ENCODE measurements at regions of chr2 and their contacts with region 1.

Region 1: DNA sequence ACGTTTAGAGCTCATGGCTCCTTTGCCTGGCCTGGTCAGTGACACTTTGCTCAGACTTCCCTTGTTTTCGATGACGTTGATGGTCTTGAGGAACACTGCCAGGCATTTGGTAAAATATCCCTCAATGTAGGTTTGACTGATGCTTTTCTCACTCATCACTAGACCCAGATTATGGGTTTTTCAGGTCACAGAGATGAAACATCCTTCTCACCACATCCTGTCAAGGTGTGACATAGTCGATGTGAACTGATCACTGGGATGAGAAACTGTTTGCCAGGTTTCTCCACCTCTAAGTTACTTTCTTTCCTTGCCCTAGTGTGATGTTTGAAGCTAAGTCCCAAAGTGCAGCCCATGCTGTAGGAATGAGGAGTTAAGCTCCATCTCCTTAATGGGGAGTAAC is 81.5 kb downstream of the AFF3 start:
- DNase-seq: no peak
- ATAC-seq: no peak
- H3K4me3 ChIP-seq: no peak overlapping the region
- H3K27ac ChIP-seq: no peak overlapping the region
- H3K4me1 ChIP-seq: no peaks in the 10 kb centered on the region
- H3K27me3 ChIP-seq: no peaks in the 10 kb centered on the region
- CTCF ChIP-seq: no peak

Region 2: DNA sequence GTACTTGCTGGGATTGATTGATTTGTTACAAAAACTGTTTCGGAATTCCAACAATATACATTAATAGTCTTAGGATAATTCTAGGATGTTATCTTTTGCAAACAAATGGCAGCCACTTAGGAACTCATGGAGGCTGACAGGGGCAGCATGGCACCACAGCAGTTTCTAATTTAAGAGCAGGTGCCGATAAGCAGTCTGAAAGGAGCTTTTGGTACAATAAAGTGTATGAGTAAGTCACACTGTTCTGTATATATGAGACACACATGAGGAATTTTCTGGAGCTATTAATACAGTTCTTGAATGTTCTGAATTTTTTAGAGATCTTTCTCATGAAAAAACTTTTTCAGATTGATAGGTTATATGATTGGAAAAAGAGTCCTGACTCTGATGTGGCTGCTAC is 671.5 kb before region 1 on chr2:
- CTCF ChIA-PET with region 1: no interaction called
- POLR2A ChIA-PET with region 1: no interaction called
- intact Hi-C with region 1: no loop called
- DNase-seq: no peak
- ATAC-seq: no peak
- H3K4me3 ChIP-seq: no peak overlapping the region
- H3K27ac ChIP-seq: no peak overlapping the region
- H3K4me1 ChIP-seq: peaks cover 9% of the 10 kb centered on the region; the same call in 1 of the 2 replicates
- H3K27me3 ChIP-seq: no peaks in the 10 kb centered on the region
- CTCF ChIP-seq: no peak

Region 3: DNA sequence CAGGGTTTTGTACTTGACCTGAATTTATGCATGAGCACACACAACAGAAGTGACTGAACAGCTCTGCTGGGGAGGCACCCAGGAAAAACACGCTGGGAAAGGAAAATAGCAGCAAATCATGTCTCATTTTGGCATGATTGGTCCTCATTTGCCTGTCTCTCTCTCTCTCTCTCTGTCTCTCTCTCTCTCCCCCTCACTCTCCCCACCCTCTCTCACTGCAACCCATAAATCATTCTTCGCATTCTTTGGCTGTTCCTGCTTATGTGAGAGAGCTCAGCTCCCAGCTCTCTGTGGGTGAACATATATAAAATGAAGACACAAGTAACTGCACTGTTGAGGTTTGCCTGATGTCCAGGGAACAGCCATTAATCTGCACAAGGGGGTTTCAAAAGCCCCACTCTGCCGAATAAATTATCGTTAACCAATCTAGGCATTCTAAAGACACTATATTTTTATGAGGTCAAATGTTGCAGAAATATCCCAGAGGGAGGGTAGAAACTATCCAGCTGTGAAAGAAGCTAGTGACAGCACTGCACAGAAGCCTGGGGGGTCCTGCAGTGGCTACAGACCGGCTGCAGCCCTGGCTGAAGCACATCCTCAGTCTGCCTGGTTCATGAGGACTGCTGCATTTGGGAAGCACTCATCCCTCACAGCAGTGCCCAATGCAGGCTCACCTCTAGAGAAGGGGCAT is 178.8 kb before region 1 on chr2:
- CTCF ChIA-PET with region 1: no interaction called
- POLR2A ChIA-PET with region 1: no interaction called
- intact Hi-C with region 1: loop called (anchors 10 kb)
- DNase-seq: peak; percentile 60
- ATAC-seq: no peak
- H3K4me3 ChIP-seq: no peak overlapping the region
- H3K27ac ChIP-seq: no peak overlapping the region
- H3K4me1 ChIP-seq: peaks cover 40% of the 10 kb centered on the region
- H3K27me3 ChIP-seq: no peaks in the 10 kb centered on the region
- CTCF ChIP-seq: no peak

Region 4: DNA sequence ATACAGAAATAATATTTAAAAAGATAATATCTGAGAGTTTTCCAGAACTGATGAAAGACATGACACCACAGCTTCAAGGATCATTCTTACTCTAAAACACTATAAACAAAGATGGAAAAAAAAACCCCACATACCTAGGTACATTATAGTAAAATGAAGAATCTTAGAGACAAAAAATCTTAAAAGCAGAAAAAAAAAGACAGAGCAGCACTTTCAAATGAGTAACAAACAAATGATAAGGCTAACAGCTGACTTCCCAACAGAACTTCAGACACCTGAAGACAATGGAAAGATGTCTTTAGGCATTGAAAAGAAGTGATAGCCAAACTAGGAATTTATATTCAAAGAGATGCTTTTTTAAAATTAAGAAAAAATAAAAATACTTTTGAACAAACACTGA is 102.7 kb after region 1 on chr2:
- CTCF ChIA-PET with region 1: no interaction called
- POLR2A ChIA-PET with region 1: no interaction called
- intact Hi-C with region 1: no loop called
- DNase-seq: no peak
- ATAC-seq: no peak
- H3K4me3 ChIP-seq: no peak overlapping the region
- H3K27ac ChIP-seq: no peak overlapping the region
- H3K4me1 ChIP-seq: no peaks in the 10 kb centered on the region
- H3K27me3 ChIP-seq: no peaks in the 10 kb centered on the region
- CTCF ChIP-seq: no peak

Region 5: GRCh38 chr2:101400048-101400447 is 1339.2 kb after region 1 on chr2:
- CTCF ChIA-PET with region 1: no interaction called
- POLR2A ChIA-PET with region 1: no interaction called
- intact Hi-C with region 1: no loop called
- DNase-seq: peak; percentile 91
- ATAC-seq: peak; percentile 46
- H3K4me3 ChIP-seq: no peak overlapping the region
- H3K27ac ChIP-seq: peak overlapping the region; percentile 88
- H3K4me1 ChIP-seq: peaks cover 49% of the 10 kb centered on the region
- H3K27me3 ChIP-seq: no peaks in the 10 kb centered on the region
- CTCF ChIP-seq: no peak